Calu3 (cell line): ENCODE measurements at regions of chr1 and their contacts with region 1.

Region 1: DNA sequence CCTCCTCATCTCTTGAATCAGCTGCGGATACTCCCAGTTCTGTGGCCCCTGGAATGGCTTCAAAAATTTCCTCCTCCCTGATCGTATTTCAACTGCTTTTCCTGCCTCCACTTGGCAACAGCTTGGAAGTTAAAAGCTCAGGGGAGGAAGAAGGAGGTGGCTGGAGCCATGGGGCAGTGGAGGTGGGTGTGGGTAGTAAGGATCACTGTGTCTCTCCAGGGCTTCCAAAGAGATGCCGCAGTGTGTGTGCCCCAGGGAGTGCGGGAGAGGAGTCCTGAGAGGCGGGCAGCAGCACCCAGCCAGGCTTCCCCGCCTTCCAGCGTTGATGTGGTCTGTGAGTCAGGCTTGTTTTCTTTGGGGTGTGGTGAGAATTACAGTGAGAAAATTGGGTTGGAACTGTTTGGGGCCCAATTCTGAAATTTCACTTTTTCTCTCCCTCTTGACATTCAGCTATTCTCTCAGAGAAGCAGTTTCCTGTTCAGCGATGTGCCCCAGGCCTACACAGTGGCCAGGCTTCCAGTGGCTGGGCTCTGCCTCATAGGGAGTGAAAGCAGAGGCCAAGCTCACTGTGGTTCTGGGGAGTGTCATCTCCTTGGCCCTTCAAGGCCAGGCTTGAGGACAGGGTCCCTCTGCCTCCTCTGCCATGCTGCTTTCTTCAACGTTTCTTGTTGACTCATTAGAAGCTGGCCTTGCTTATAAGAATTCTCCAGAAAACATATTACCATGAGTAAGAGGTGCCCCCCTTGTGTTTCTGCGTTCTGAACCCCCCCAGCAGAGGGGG is 69.0 kb downstream of the PGM1 start:
- DNase-seq: peak; percentile 60
- H3K4me3 Mint-ChIP-seq: peak overlapping the region; percentile 50
- H3K27ac Mint-ChIP-seq: peak overlapping the region; percentile 99
- H3K4me1 Mint-ChIP-seq: peaks cover 59% of the 10 kb centered on the region
- H3K27me3 Mint-ChIP-seq: no peaks in the 10 kb centered on the region
- CTCF ChIP-seq: no peak

Region 2: DNA sequence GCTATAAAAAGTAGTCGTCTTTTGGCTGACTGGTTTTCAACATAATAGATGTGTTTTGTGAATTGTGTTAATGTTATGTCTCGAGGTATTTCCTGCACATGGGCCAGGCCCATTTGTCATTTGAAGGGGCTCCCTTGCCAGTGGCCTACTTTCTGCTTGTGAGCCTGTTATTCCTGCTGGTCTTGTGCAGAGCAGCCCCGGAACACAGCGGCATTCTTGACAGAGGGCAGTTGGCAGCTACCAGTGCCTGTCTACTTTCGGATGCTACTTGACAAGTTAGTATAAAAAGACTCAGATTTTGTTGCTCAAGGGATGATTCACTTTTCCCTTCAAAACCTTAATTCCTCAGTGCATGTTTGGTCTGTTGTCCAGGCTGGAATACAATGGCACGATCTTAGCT is 40.5 kb before region 1 on chr1:
- CTCF ChIA-PET with region 1: interaction called, 3 read pairs
- intact Hi-C with region 1: loop called (anchors 2 kb)
- DNase-seq: no peak
- H3K4me3 Mint-ChIP-seq: no peak overlapping the region
- H3K27ac Mint-ChIP-seq: no peak overlapping the region
- H3K4me1 Mint-ChIP-seq: peaks cover 60% of the 10 kb centered on the region
- H3K27me3 Mint-ChIP-seq: no peaks in the 10 kb centered on the region
- CTCF ChIP-seq: no peak

Region 3: GRCh38 chr1:63643926-63644325 is 18.3 kb before region 1 on chr1:
- CTCF ChIA-PET with region 1: interaction called, 11 read pairs
- intact Hi-C with region 1: loop called (anchors 1 kb)
- DNase-seq: peak; percentile 59
- H3K4me3 Mint-ChIP-seq: peak overlapping the region; percentile 2
- H3K27ac Mint-ChIP-seq: peak overlapping the region; percentile 75
- H3K4me1 Mint-ChIP-seq: peaks cover 74% of the 10 kb centered on the region
- H3K27me3 Mint-ChIP-seq: no peaks in the 10 kb centered on the region
- CTCF ChIP-seq: no peak

Region 4: GRCh38 chr1:63835075-63835633 is 172.9 kb after region 1 on chr1:
- CTCF ChIA-PET with region 1: no interaction called
- intact Hi-C with region 1: no loop called
- DNase-seq: no peak
- H3K4me3 Mint-ChIP-seq: no peak overlapping the region
- H3K27ac Mint-ChIP-seq: peak overlapping the region; percentile 51
- H3K4me1 Mint-ChIP-seq: peaks cover 54% of the 10 kb centered on the region
- H3K27me3 Mint-ChIP-seq: no peaks in the 10 kb centered on the region
- CTCF ChIP-seq: no peak